WTC11 (cell line): ENCODE measurements at regions of chr11 and their contacts with region 1.

Region 1: DNA sequence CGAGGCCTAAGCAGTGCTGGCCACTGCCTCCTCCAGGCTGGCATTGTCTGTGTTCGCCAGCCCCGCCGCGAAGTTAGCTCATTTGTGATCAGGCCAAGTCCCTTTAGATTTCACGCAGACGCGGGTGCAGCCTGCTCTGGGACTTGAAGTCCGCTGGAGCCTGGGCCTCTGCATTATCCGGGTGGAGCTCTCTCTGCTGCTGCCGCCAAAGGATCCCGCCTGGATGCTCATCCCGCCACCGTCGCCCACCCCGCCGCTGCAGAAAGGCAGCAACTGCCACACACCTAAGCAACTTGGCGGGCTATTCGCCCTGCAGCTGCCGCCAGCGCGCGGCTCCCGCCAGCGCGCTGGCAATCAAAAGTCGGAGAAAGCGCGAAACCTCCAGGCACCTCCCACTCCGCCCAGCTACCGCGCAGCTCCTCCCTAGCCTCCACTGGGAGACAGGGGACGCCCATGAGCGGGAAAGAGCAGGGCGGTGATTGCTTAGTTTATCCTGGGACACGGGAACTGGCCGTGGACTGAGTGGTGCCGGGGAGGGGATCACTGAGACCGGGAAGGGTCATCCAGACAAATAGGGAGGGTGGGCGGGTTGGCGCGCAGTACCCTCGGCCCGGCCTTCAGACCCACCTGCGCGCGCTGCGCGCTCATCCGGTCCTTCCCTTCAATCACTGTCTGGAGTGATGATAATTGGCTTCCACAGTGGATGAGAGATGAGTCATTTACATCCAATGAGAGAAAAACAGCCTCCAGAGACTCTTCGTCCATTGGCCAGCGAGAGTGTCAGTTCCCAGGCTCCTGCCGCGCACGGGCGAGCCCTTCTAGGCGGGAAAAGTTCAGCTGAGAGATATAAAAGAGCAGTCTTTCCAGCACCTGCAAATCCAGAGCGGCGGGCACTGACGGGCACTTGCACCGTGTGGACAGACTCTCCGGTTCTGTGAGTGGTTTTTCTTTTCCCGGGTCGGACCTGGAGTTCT is at the start of gene FAM111B:
- DNase-seq: peak; percentile 82
- ATAC-seq: peak; percentile 82
- H3K4me3 Mint-ChIP-seq: peak within 1 kb of the TSS; percentile 85
- H3K27ac Mint-ChIP-seq: no peak within 1 kb of the TSS; the same call in 1 of the 2 replicates
- H3K4me1 Mint-ChIP-seq: peaks cover 35% of the 10 kb centered on the region
- H3K27me3 Mint-ChIP-seq: peaks cover 51% of the 10 kb centered on the region
- CTCF ChIP-seq: no peak
- total RNA-seq, gene FAM111B: 16.3 to 25.5 TPM (median 17.7 TPM) in 3 replicates

Region 2: GRCh38 chr11:58796333-58796732 is 310.3 kb before region 1 on chr11:
- CTCF ChIA-PET with region 1: no interaction called
- POLR2A ChIA-PET with region 1: no interaction called
- DNase-seq: peak; percentile 14
- ATAC-seq: peak; percentile 81
- H3K4me3 Mint-ChIP-seq: peak overlapping the region; percentile 51
- H3K27ac Mint-ChIP-seq: peak overlapping the region; percentile 74; the same call in 1 of the 2 replicates
- H3K4me1 Mint-ChIP-seq: peaks cover 26% of the 10 kb centered on the region
- H3K27me3 Mint-ChIP-seq: no peaks in the 10 kb centered on the region
- CTCF ChIP-seq: no peak

Region 3: DNA sequence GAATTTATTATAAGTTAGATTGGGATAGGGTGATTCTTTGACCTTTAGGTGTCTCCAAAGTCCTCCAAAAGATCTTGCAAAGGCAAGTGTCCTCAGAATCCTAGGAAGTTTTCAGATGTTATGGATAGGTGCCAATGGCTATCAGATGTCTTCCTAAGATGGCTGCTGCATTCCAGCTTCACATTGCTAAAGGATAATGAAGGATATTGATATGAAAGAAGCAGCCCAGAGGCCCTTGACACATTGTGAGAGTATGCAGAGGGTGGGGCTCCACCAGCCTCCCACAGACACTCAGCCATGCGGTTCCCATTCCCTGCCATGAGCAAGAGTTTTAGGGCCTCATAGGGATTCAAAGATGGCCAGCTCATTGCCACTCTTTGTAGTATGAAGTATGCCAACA is 239.9 kb before region 1 on chr11:
- CTCF ChIA-PET with region 1: no interaction called
- POLR2A ChIA-PET with region 1: no interaction called
- DNase-seq: no peak
- ATAC-seq: no peak
- H3K4me3 Mint-ChIP-seq: no peak overlapping the region
- H3K27ac Mint-ChIP-seq: no peak overlapping the region
- H3K4me1 Mint-ChIP-seq: no peaks in the 10 kb centered on the region
- H3K27me3 Mint-ChIP-seq: peaks cover 11% of the 10 kb centered on the region; the same call in 1 of the 2 replicates
- CTCF ChIP-seq: no peak

Region 4: DNA sequence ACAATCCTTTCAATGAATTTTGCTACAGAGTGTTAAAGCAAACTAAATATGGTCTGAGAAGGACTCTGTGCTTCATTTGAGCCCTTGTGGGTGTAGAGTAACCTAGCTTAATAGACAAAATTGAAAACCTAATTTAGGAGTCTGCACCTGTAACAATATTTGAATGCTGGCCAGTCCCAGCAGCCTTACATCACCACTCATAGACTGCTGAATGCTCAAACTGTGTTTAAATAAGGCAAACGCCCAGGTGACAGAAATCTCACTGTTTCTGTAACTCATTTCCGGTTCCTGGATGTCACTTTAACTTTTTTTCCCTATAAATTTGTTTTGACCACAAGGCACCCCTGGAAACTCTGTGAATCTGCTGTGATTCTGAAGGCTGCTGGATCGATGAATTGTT is 66.0 kb before region 1 on chr11:
- CTCF ChIA-PET with region 1: no interaction called
- POLR2A ChIA-PET with region 1: no interaction called
- DNase-seq: no peak
- ATAC-seq: no peak
- H3K4me3 Mint-ChIP-seq: no peak overlapping the region
- H3K27ac Mint-ChIP-seq: no peak overlapping the region
- H3K4me1 Mint-ChIP-seq: peaks cover 5% of the 10 kb centered on the region; the same call in 1 of the 2 replicates
- H3K27me3 Mint-ChIP-seq: no peaks in the 10 kb centered on the region
- CTCF ChIP-seq: no peak

Region 5: GRCh38 chr11:59142530-59143507 is 36.2 kb after region 1 on chr11 and contains the start of gene FAM111A:
- CTCF ChIA-PET with region 1: interaction called, 10 read pairs
- POLR2A ChIA-PET with region 1: interaction called, 5 read pairs
- DNase-seq: peak; percentile 81
- ATAC-seq: peak; percentile 80
- H3K4me3 Mint-ChIP-seq: peak within 1 kb of the TSS; percentile 86
- H3K27ac Mint-ChIP-seq: peak within 1 kb of the TSS; percentile 96
- H3K4me1 Mint-ChIP-seq: peaks cover 42% of the 10 kb centered on the region
- H3K27me3 Mint-ChIP-seq: peaks cover 13% of the 10 kb centered on the region
- CTCF ChIP-seq: no peak
- total RNA-seq, gene FAM111A: 18.8 to 24.4 TPM (median 22.0 TPM) in 3 replicates